ENCODE measurements at regions of chr10 and their contacts with region 1.

Region 1: GRCh38 chr10:14878266-14879054 is at the start of gene SUV39H2:
- DNase-seq: peak; percentile 100
- H3K4me3 ChIP-seq: peak within 1 kb of the TSS; percentile 88 to 97
- H3K27ac ChIP-seq: peak within 1 kb of the TSS; percentile 94 to 96
- H3K4me1 ChIP-seq: peaks cover 18 to 19% of the 10 kb centered on the region in 2 experiments; a peak in 3 of 4 replicates
- H3K27me3 ChIP-seq: no peaks in the 10 kb centered on the region
- CTCF ChIP-seq: 0 out of 2 replicates have a peak, but pooled peaks have one; percentile 18
- EP300 ChIP-seq: no peak
- RAD21 ChIP-seq: no peak
- polyA plus RNA-seq, gene SUV39H2: 4.6 and 4.9 TPM in 2 replicates

Region 2: GRCh38 chr10:14837757-14838581 is 40.5 kb before region 1 on chr10 and contains the starts of genes CDNF, HSPA14 and MSANTD7:
- CTCF ChIA-PET with region 1: interaction called, 8 read pairs
- POLR2A ChIA-PET with region 1: interaction called, 36 read pairs
- DNase-seq: peak; percentile 97
- H3K4me3 ChIP-seq: peak within 1 kb of the TSS; percentile 93 to 99
- H3K27ac ChIP-seq: peak within 1 kb of the TSS; percentile 81 to 93
- H3K4me1 ChIP-seq: peaks cover 0 to 7% of the 10 kb centered on the region in 2 experiments; a peak in 1 of 4 replicates
- H3K27me3 ChIP-seq: no peaks in the 10 kb centered on the region
- CTCF ChIP-seq: no peak
- EP300 ChIP-seq: no peak
- RAD21 ChIP-seq: no peak
- polyA plus RNA-seq, gene CDNF: 1.0 and 1.2 TPM in 2 replicates
- polyA plus RNA-seq, gene HSPA14: 8.8 and 10.8 TPM in 2 replicates
- polyA plus RNA-seq, gene MSANTD7: 3.2 and 3.9 TPM in 2 replicates

Region 3: GRCh38 chr10:14889318-14889717 is 10.9 kb after region 1 on chr10:
- CTCF ChIA-PET with region 1: interaction called, 10 read pairs
- POLR2A ChIA-PET with region 1: interaction called, 3 read pairs
- DNase-seq: peak; percentile 20
- H3K4me3 ChIP-seq: no peak overlapping the region
- H3K27ac ChIP-seq: no peak overlapping the region
- H3K4me1 ChIP-seq: no peaks in the 10 kb centered on the region
- H3K27me3 ChIP-seq: no peaks in the 10 kb centered on the region
- CTCF ChIP-seq: peak; percentile 45
- EP300 ChIP-seq: no peak
- RAD21 ChIP-seq: no peak

Region 4: DNA sequence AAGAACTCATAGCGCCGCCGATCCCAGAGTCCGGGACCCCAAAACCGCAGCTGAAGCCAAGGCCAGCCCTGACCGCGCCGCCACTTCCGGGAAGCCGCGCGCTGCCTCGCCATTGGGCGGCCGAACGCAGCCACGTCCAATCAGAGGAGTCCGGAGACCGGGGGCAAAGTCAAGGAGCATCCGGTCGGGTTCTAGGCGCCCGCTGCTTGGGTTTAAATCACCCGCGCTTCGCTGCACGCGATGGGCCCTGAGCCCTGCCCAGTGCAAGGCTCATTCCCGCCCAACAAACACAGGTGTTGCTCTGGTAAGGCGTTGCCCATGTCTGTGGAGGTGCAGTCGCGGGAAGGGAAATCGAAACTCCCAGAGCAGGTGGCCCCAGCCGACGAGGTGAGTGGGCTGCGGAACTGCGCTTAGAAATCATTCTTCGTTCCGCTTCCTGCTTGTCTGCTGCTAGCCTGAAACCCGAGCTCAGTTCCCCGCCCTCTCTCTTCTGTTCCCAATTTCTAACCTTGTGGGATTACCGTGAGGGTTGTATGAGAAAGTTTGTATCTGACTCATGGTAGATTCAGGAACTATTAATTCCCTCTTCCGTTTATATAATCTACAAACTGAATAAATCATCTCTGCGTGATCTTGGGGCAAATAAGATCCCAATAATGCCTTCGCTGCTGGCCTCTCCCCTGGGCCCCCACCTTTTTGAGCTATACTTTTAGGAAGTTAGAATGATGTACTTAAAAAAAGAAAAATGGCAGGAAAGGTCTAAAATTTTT is 75.7 kb after region 1 on chr10 and contains the start of gene DCLRE1C:
- CTCF ChIA-PET with region 1: no interaction called
- POLR2A ChIA-PET with region 1: interaction called, 17 read pairs
- DNase-seq: peak; percentile 95
- H3K4me3 ChIP-seq: peak within 1 kb of the TSS; percentile 72 to 90
- H3K27ac ChIP-seq: peak within 1 kb of the TSS; percentile 79 to 90
- H3K4me1 ChIP-seq: peaks cover 7 to 10% of the 10 kb centered on the region in 2 experiments; a peak in 2 of 4 replicates
- H3K27me3 ChIP-seq: no peaks in the 10 kb centered on the region
- CTCF ChIP-seq: no peak
- EP300 ChIP-seq: no peak
- RAD21 ChIP-seq: no peak
- polyA plus RNA-seq, gene DCLRE1C: 2.5 and 3.0 TPM in 2 replicates

Region 5: DNA sequence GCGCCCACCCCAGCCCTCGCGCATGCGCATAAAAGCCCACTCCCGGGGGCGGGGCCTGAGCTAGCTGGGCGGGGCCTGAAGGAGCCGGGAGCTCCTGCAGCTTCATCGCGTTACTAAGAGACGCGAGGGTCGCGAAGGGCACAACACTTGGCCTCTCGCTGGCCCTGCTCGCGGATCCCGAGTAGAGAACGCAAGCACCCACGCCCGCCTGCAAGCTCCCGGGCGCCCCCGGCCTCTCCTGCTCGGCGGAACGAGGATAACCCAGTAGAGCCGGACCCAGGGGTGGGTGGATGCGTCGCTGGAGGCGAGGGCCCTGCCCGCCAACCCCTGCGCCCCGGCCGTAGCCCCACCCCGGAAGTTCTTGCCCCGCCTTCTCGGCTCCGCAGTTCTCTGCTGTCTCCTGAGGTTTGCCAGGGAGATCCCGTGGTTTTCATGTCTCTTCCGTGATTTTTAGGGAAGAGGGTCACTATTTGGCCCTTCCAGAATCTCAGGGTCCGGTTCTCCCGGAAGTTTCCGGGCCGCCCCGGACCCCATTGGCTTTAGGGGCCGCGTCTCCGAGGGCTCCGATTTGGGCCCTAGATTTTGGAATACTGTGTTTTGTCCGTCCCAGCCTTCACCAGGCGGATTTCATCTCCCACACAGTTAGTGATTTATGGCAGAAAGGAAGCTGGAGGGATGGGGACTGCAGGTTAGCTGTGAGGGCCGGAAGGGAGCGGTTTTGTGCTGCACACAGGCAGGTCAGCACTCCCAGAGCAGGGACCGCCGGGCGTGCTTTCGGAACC is 81.0 kb after region 1 on chr10 and contains the start of gene MEIG1:
- CTCF ChIA-PET with region 1: interaction called, 4 read pairs
- POLR2A ChIA-PET with region 1: interaction called, 17 read pairs
- DNase-seq: peak; percentile 95
- H3K4me3 ChIP-seq: peak within 1 kb of the TSS; percentile 62 to 82
- H3K27ac ChIP-seq: peak within 1 kb of the TSS; percentile 96 to 98
- H3K4me1 ChIP-seq: peaks cover 3 to 7% of the 10 kb centered on the region in 2 experiments; a peak in 2 of 4 replicates
- H3K27me3 ChIP-seq: no peaks in the 10 kb centered on the region
- CTCF ChIP-seq: no peak
- EP300 ChIP-seq: 0 out of 4 replicates have a peak, but pooled peaks of 1 of the 2 experiments have one; percentile 10
- RAD21 ChIP-seq: no peak
- polyA plus RNA-seq, gene MEIG1: 0.42 and 0.43 TPM in 2 replicates